Cardiac septum (tissue), 1 donor: ENCODE measurements at regions of chr15 and their contacts with region 1.

Region 1: DNA sequence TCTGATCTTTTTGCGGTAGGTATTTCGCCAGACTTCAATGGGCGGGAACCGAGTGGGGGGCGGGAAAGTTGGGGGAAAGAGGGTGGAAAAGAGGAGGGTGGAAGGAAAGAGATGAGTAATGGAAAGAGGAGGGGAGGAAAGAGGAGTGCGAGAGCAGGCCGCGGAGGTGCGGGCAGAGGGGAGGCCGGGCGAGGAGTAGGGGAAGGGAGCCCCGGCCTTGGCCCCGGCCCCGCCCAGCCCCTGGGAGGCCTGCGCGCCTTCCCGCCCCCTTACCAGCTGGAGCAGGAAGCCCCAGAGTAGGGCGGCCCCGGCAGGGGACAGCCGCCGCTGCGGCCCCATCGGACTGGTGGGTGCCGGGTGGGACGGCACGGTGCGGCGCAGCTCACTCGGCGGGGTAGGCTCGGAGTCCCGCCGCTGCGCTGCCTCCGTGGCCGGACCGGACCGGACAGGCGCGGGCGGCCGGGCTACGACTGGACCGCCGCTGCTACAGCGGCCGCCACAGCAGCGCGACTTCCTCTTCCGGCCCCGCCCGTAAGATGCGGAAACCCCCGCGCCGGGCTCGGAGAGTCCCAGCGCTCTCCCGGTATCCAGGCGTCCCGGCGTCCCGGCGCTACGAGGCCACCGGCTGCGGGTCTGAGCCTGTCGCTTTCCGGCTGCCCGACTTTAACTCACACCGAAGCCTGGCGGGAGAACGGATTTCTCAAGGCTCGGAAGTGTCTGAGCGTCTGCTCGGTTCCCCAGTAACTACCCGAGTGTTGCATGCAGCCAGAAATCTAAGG is at the start of gene SPPL2A:
- DNase-seq: peak; percentile 95
- total RNA-seq, gene SPPL2A: 116 TPM

Region 2: DNA sequence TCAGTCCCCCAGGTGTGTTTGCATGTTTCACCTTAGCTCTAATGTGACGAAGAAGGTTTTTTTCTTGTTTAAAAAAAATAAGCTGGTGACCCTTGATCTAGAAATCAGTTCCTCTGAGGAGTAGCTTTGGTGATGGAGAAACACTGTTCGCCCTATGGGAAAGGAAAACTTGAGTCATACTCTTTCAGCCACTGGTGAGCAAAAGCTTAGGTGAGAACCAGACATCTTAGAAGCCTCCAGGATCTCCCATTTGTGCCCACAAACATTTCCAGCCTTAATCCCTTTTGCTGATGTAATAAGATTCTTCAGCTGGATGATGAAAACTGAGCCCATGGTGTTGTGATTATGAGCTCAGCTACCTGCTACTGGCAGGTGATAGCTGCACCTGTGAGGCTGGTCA is 545.6 kb before region 1 on chr15:
- intact Hi-C with region 1: no loop called
- DNase-seq: no peak

Region 3: DNA sequence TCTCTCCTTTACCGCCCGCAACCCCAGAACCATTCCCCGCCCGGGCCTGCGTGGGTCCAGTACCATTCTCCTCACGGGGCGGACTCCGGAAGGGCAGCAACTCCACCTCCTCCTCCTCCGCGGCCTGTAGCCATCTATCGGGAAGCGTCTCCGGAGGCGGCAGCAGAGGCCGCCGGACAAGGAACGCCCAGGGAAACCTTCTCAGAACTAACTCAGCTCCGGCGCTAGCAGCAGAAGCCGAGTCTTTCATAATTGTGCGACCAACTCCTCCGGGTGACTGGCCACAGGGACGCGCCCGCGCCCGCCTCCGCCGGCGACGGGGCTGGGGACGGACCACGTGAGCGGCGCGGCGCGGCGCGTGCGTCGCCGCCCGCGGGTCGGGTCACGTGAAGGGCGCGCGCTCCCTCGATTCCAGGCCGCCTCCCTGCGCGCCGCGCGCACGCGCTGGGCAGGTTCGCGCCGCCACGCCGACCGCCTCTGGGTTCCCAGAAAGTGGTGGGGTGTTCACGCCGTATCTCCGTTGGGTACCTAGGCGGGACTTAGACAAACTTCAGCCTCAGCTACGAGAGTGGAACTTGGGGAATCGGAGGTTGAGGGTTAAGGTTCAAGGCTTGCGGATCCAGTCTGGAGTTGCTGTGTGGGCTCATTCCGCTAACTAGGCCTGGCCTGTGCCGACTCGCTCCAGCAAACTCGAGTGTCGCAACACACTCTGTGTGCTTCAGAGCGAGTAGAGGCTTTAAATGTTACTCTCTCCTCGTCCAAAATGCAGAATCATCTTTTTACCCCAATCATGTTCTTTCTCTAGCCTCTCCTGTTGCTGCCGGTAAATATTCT is 78.7 kb before region 1 on chr15 and contains the start of gene TRPM7:
- intact Hi-C with region 1: loop called (anchors 1 kb)
- DNase-seq: peak; percentile 95
- total RNA-seq, gene TRPM7: 34.5 TPM

Region 4: DNA sequence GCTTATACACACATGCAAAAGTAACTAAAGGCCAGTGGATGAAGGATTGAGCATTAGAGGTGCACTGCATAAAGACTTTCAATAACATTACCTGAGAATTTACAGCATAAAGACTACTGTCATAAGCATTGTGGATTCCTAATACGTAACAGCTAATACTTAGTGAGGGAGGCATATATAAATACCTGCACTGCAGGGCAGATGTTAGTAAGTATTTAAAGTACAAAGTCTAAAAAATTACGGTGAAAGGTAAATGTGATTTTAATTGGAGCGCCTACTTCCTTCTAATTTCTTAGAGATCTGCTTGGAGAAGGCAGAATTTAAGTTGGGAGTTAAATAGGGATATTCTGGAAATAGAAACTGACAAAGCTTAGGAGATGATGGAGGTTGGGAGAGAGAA is 53.4 kb before region 1 on chr15:
- intact Hi-C with region 1: loop called (anchors 5 kb)
- DNase-seq: no peak

Region 5: GRCh38 chr15:50828610-50829219 is 63.3 kb after region 1 on chr15:
- intact Hi-C with region 1: no loop called
- DNase-seq: no peak

Region 6: GRCh38 chr15:50876989-50877360 is 111.6 kb after region 1 on chr15:
- intact Hi-C with region 1: loop called (anchors 5 kb)
- DNase-seq: no peak

Region 7: GRCh38 chr15:50993598-50993997 is 228.2 kb after region 1 on chr15:
- intact Hi-C with region 1: no loop called
- DNase-seq: no peak